Breast epithelium (tissue), 4 donors: ENCODE measurements at regions of chr1 and their contacts with region 1.

Region 1: DNA sequence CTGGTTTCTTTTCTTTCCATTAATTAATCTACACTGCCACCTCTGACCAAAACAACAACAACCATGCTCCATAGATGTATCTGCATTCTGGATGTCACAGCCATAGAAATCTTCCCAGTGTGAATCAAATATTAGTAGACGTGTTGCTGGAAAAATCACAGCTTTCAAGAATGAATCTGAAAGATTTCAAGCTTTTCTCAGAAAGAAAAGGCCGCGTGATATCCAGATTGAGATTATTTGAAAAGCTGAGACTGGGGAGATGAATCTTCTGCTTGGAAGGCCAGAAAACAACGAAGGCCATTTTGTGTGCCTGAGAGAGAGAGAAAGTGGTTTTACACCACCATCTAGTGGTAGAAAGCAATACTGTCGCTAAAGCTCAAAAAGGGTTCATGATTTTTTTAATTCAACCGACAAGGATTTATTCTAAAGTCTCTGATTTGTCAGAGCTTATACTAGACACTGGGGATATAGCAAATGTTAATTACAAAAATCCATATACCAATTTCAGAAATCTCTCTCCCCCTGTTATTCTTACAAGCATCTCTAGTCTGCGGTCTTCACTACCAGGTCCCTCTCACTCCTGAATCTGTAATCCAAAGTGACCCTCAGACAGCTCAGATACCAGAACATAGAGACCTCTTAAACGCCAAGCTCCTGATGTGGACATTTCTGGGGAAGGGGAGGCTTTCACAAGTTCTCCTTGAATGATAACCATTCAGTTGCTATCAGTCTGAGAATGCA is 87.5 kb upstream of the SGIP1 start:
- DNase-seq: no peak
- H3K4me3 ChIP-seq: no peak overlapping the region
- H3K27ac ChIP-seq: no peak overlapping the region
- H3K4me1 ChIP-seq: no peaks in the 10 kb centered on the region
- H3K27me3 ChIP-seq: no peaks in the 10 kb centered on the region
- CTCF ChIP-seq: peak; percentile 87 to 94 (median 93)
- POLR2A ChIP-seq: no peak

Region 2: GRCh38 chr1:66242646-66243547 is 203.5 kb before region 1 on chr1:
- intact Hi-C with region 1: loop called (anchors 5 kb)
- DNase-seq: peak; percentile 67 to 86
- H3K4me3 ChIP-seq: no peak overlapping the region
- H3K27ac ChIP-seq: peak overlapping the region in 1 of 2 donors; percentile 10
- H3K4me1 ChIP-seq: peaks cover 0 to 3% of the 10 kb centered on the region in 2 donors
- H3K27me3 ChIP-seq: no peaks in the 10 kb centered on the region
- CTCF ChIP-seq: peak; percentile 81 to 97 (median 96)
- POLR2A ChIP-seq: no peak

Region 3: GRCh38 chr1:66503841-66504470 is 57.5 kb after region 1 on chr1:
- intact Hi-C with region 1: no loop called
- DNase-seq: no peak
- H3K4me3 ChIP-seq: no peak overlapping the region
- H3K27ac ChIP-seq: no peak overlapping the region
- H3K4me1 ChIP-seq: no peaks in the 10 kb centered on the region
- H3K27me3 ChIP-seq: no peaks in the 10 kb centered on the region
- CTCF ChIP-seq: peak; percentile 6 to 53 (median 41)
- POLR2A ChIP-seq: no peak

Region 4: DNA sequence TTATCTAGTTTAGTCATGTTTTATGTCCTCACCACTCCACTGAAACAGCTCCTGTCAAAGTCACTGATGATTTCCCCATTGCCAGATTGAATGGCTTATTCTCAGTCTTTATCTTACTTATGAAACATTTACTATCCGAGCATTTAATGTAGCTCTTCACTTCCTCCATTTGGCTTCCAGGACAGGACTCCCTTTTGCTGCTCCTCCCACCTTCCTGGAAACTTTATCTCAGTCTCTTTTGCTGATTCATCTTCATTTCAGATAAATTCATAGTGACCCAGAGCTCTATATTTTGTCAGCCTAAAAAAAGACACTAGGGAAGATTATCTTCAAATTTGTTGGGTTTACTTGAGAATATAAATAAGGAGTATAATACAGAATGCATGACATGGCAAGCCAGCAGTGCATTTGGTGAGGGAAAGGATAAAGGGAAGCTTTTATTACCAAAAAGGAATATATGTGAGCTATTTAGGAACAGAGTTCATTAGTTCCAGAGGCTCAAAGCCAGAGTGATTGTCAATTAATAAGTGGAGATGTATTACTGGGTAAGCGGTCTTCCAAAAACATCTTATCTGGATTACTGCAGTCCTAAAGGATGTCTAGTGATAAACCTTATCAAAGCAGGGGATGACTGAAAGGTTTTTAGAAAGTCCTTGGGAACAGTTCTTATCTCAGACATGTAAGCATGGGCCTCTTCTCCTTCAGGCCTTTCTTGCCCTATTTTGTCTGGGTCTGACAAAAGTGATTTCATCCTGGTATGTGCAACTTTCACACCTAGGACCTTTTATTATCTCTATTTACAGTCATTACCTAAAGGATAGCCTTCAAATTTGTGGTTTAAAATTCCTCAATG is 745.5 kb after region 1 on chr1:
- intact Hi-C with region 1: no loop called
- DNase-seq: no peak
- H3K4me3 ChIP-seq: no peak overlapping the region
- H3K27ac ChIP-seq: no peak overlapping the region
- H3K4me1 ChIP-seq: no peaks in the 10 kb centered on the region
- H3K27me3 ChIP-seq: no peaks in the 10 kb centered on the region
- CTCF ChIP-seq: no peak
- POLR2A ChIP-seq: no peak

Region 5: DNA sequence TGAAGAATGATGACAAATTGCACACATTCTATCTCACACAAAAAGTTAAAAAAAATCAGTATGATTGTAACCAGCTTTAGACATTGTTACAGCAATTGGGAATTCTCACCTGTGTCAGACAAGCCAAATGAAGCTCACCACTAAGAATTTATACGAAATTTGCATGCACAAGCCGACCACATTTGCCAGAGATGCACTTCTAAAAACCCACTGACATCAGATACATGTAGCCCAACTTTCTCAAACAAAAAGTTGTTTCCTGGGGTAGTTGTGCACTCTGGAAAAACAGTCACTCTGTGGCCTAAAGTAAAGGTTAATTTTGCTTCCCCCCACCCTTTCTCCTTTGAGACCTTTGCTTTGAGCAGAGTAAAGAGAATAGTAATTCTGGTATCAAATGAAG is 793.3 kb after region 1 on chr1:
- intact Hi-C with region 1: no loop called
- DNase-seq: no peak
- H3K4me3 ChIP-seq: no peak overlapping the region
- H3K27ac ChIP-seq: no peak overlapping the region
- H3K4me1 ChIP-seq: no peaks in the 10 kb centered on the region
- H3K27me3 ChIP-seq: no peaks in the 10 kb centered on the region
- CTCF ChIP-seq: no peak
- POLR2A ChIP-seq: no peak